Heart right ventricle (tissue), 16 donors: ENCODE measurements at regions of chr17 and their contacts with region 1.

Region 1: GRCh38 chr17:32755045-32755805 is 121.7 kb downstream of the MYO1D start:
- DNase-seq: no peak
- ATAC-seq: peak in 7 of 8 donors; percentile 52 to 82 (median 72)
- H3K4me3 ChIP-seq: no peak overlapping the region
- H3K27ac ChIP-seq: no peak overlapping the region
- H3K4me1 ChIP-seq: peaks cover 0 to 5% (median 0%) of the 10 kb centered on the region in 9 donors
- H3K27me3 ChIP-seq: no peaks in the 10 kb centered on the region
- CTCF ChIP-seq: peak in 8 of 9 donors; percentile 17 to 69 (median 58)

Region 2: GRCh38 chr17:32461853-32462617 is 293.2 kb before region 1 on chr17:
- intact Hi-C with region 1: loop called in 3 of 10 experiments (anchors 2 to 10 kb)
- DNase-seq: peak in 1 of 2 donors; percentile 32
- ATAC-seq: peak in 5 of 8 donors; percentile 46 to 79 (median 61)
- H3K4me3 ChIP-seq: no peak overlapping the region
- H3K27ac ChIP-seq: no peak overlapping the region
- H3K4me1 ChIP-seq: peaks cover 0 to 11% (median 0%) of the 10 kb centered on the region in 9 donors
- H3K27me3 ChIP-seq: no peaks in the 10 kb centered on the region
- CTCF ChIP-seq: peak; percentile 29 to 65 (median 58)

Region 3: DNA sequence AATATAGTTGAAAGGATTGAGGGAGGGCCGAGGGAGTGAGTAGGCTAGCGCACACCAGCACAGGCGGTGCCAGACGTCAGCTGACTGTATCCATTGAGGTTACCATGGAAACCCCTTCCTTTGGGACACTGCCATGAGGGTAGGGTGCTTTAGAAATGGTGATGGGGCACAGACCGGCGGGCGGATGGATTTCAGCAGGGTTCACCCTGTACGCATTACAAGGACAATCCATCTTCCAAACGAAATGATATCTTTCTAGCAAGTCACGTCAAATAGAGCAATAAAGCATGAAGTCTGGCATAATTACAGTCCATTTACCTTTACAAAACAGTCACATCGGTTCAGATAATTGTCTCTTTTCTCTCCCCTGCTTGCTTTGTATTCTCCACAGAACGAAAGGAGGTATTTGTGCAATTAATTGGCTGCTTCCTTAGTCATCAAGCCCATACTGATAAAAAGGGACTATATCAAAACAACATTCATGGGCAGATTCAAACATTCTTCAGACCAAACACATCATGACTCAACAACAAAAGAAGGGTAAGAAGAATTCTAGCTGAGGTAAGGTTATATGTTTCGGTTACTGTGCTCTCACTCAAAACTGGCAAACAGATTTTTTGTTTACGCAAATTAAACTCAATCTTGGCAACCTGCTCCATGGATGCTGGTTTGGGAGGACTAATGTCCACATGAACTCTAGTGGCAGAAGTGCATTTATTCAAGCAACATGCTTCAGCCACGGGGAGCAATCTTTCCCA is 127.8 kb before region 1 on chr17:
- intact Hi-C with region 1: no loop called
- DNase-seq: no peak
- ATAC-seq: no peak
- H3K4me3 ChIP-seq: no peak overlapping the region
- H3K27ac ChIP-seq: no peak overlapping the region
- H3K4me1 ChIP-seq: peaks cover 0 to 10% (median 0%) of the 10 kb centered on the region in 9 donors
- H3K27me3 ChIP-seq: no peaks in the 10 kb centered on the region
- CTCF ChIP-seq: no peak

Region 4: DNA sequence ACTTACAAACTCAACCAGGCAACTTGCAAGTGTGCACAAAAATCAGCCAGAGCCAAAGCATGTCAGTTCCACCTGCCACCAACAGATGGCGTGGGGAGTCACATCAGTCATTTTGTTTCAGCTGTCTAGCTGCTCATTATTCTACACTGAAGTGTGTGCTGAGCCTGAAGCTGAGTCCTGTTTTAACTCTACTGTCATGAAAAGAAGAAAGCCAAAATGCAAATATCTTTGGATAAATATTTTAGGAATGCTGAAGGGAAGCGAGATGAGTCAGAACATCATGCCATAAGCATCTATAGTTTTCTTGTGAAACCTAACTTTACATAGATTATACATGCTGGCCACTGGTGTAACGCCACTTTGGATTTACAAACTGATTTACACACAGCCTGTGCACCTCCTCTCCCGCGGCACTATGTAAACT is 95.8 kb before region 1 on chr17:
- intact Hi-C with region 1: loop called in 5 of 10 experiments (anchors 2 to 10 kb)
- DNase-seq: peak; percentile 64 to 65
- ATAC-seq: peak; percentile 55 to 89 (median 84)
- H3K4me3 ChIP-seq: no peak overlapping the region
- H3K27ac ChIP-seq: no peak overlapping the region
- H3K4me1 ChIP-seq: peaks cover 0 to 21% (median 6%) of the 10 kb centered on the region in 9 donors
- H3K27me3 ChIP-seq: no peaks in the 10 kb centered on the region
- CTCF ChIP-seq: peak; percentile 79 to 95 (median 90)

Region 5: DNA sequence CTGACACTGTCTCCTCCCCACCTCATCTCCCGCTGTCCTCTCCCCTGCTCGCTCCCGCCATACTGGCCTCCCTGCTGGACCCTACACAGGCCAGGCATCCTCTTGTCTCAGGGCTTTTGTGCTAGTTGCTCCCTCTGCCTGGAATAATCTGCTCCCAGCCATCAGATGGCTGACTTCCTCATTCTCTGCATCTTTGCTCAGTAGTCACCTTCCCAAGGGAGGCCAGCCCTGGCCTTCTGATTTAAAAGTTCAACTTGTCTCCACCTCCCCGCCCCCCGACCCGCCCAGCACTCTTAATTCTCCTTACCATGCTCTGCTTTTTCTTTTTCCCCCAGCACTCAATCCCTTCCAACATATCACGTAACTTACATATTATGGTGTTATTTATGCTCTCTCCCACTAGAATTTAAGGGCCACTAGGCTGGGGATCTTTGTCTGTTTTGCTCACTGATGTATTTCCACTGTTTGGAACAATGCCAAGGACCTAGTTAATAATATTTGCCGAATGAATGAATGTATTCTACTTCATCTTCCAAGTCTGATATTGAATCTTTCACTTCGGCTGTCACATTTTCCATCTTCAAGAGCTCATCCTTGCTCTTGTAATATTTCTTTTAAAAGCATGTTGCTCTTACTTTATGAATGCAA is 90.2 kb before region 1 on chr17:
- intact Hi-C with region 1: loop called in 2 of 10 experiments (anchors 5 to 10 kb)
- DNase-seq: no peak
- ATAC-seq: no peak
- H3K4me3 ChIP-seq: no peak overlapping the region
- H3K27ac ChIP-seq: no peak overlapping the region
- H3K4me1 ChIP-seq: no peaks in the 10 kb centered on the region
- H3K27me3 ChIP-seq: no peaks in the 10 kb centered on the region
- CTCF ChIP-seq: no peak

Region 6: GRCh38 chr17:33021731-33022408 is 266.6 kb after region 1 on chr17:
- intact Hi-C with region 1: no loop called
- DNase-seq: no peak
- ATAC-seq: no peak
- H3K4me3 ChIP-seq: no peak overlapping the region
- H3K27ac ChIP-seq: no peak overlapping the region
- H3K4me1 ChIP-seq: no peaks in the 10 kb centered on the region
- H3K27me3 ChIP-seq: peaks cover 0 to 27% (median 10%) of the 10 kb centered on the region in 7 donors
- CTCF ChIP-seq: no peak